Psoas muscle (tissue), 8 donors: ENCODE measurements at regions of chr19 and their contacts with region 1.

Region 1: GRCh38 chr19:15379083-15379995 is at the start of gene AKAP8:
- DNase-seq: peak; percentile 98 to 99
- ATAC-seq: peak; percentile 86 to 94 (median 90)
- H3K4me3 ChIP-seq: peak within 1 kb of the TSS; percentile 78
- H3K27ac ChIP-seq: peak within 1 kb of the TSS; percentile 93
- H3K4me1 ChIP-seq: peaks cover 44% of the 10 kb centered on the region
- H3K27me3 ChIP-seq: no peaks in the 10 kb centered on the region
- CTCF ChIP-seq: no peak
- total RNA-seq, gene AKAP8: 18.9 to 42.8 (median 27.8) TPM

Region 2: GRCh38 chr19:15177269-15178116 is 201.8 kb before region 1 on chr19:
- intact Hi-C with region 1: loop called in 1 of 2 experiments (anchors 5 kb)
- DNase-seq: peak; percentile 79 to 90
- ATAC-seq: peak; percentile 86 to 97 (median 94)
- H3K4me3 ChIP-seq: peak overlapping the region; percentile 39
- H3K27ac ChIP-seq: no peak overlapping the region
- H3K4me1 ChIP-seq: peaks cover 3% of the 10 kb centered on the region
- H3K27me3 ChIP-seq: peaks cover 0 to 18% (median 5%) of the 10 kb centered on the region in 3 donors
- CTCF ChIP-seq: peak; percentile 100

Region 3: GRCh38 chr19:15332311-15332996 is 46.9 kb before region 1 on chr19 and contains the start of gene BRD4:
- intact Hi-C with region 1: loop called in 1 of 2 experiments (anchors 2 kb)
- DNase-seq: peak; percentile 74 to 86
- ATAC-seq: peak; percentile 67 to 74 (median 71)
- H3K4me3 ChIP-seq: peak within 1 kb of the TSS; percentile 85
- H3K27ac ChIP-seq: peak within 1 kb of the TSS; percentile 91
- H3K4me1 ChIP-seq: peaks cover 69% of the 10 kb centered on the region
- H3K27me3 ChIP-seq: no peaks in the 10 kb centered on the region
- CTCF ChIP-seq: no peak
- total RNA-seq, gene BRD4: 65.3 to 120 (median 101) TPM

Region 4: DNA sequence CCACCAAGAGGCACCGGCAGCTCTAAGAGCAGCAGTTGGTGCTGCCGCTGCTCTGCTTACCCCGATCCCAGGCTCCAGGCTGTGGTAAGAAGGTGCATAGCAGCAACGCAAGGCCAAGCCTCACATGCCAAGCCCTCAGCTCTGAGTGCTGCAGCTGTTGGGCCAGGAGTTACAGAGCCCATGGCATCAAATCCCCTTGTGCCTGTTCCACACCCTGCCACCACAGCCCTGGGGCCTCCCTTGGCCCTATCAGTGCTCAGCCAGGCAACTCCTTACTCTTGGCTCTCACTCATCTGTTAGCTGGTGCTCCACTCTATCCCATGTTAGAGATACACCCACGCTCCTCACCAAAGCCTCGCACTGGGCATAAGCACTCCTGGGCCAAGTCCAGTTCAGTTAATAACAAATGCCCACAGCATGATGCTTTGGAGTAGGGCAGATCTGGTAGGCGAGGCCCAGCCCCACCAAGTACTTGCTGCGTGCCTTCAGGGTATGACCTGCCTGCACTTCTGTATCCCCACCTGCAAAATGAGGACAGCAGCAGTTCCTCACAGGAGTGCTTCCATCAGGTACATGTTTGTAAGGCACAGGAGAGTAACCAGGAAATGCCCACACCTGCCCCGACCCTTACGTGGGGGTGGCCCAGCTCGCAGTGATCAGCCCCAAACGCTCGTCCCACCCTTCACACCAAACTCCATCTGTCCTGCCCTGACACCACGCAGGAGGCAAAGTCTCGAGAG is 23.2 kb after region 1 on chr19:
- intact Hi-C with region 1: no loop called
- DNase-seq: peak in 1 of 2 donors; percentile 83
- ATAC-seq: peak; percentile 59 to 84 (median 66)
- H3K4me3 ChIP-seq: no peak overlapping the region
- H3K27ac ChIP-seq: peak overlapping the region; percentile 77
- H3K4me1 ChIP-seq: peaks cover 74% of the 10 kb centered on the region
- H3K27me3 ChIP-seq: no peaks in the 10 kb centered on the region
- CTCF ChIP-seq: peak; percentile 14

Region 5: GRCh38 chr19:15418588-15419412 is 39.5 kb after region 1 on chr19 and contains the start of gene AKAP8L:
- intact Hi-C with region 1: loop called in 1 of 2 experiments (anchors 5 kb)
- DNase-seq: peak; percentile 98 to 99
- ATAC-seq: peak; percentile 89 to 95 (median 94)
- H3K4me3 ChIP-seq: peak within 1 kb of the TSS; percentile 97
- H3K27ac ChIP-seq: peak within 1 kb of the TSS; percentile 93
- H3K4me1 ChIP-seq: peaks cover 58% of the 10 kb centered on the region
- H3K27me3 ChIP-seq: no peaks in the 10 kb centered on the region
- CTCF ChIP-seq: peak; percentile 39
- total RNA-seq, gene AKAP8L: 37.3 to 66.2 (median 54.3) TPM

Region 6: DNA sequence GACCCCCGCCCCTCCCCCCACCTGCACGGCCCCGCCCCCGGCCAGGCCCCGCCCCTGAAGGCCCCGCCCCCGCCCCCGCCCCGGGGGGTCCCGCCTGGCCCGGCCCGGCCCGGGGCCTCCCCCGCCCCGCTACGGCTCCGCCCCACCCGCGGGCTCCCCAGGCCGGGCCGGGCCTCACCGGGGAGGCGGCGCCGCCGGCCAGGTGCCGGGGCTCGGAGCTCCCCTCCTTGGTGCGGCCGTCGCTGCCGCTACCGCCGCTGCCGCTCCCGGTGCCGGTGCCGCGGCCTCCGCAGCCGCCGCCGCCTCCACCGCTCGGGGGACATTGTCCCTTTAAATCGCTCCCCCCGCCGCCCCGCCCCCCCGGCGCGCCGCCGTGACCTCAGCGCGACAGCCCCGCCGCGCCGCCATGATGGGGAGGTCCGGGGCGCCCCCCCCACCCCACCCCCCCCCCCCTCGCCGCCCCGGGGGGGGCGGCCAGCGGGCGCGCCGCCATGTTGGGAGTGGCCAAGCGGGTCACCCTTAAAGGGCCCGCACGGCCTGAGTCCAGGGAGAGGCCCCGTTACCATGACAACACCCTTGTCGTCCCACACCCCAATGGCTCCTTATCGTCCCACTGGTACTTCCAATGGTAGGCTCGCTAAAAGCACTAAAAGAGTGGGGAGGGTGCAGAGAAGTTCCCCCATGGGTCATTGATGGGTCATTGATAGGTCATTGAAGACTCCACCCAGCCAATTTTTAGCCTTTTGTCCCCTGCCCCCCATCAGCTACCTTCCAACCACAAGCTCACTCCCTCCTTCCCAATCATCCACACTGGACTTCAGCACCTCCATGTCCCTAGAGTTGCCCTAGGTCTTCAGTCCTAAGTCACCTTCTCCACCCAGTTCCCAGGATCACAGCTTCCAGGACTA is 70.5 kb after region 1 on chr19 and contains the start of gene WIZ:
- intact Hi-C with region 1: loop called in 1 of 2 experiments (anchors 5 kb)
- DNase-seq: peak; percentile 91 to 94
- ATAC-seq: peak; percentile 16 to 42 (median 18)
- H3K4me3 ChIP-seq: peak within 1 kb of the TSS; percentile 78
- H3K27ac ChIP-seq: peak within 1 kb of the TSS; percentile 78
- H3K4me1 ChIP-seq: peaks cover 27% of the 10 kb centered on the region
- H3K27me3 ChIP-seq: peaks cover 0 to under 1% (median 0%) of the 10 kb centered on the region in 3 donors
- CTCF ChIP-seq: no peak
- total RNA-seq, gene WIZ: 16.6 to 39.1 (median 25.8) TPM